ENCODE measurements at regions of chr4 and their contacts with region 1.

Region 1: DNA sequence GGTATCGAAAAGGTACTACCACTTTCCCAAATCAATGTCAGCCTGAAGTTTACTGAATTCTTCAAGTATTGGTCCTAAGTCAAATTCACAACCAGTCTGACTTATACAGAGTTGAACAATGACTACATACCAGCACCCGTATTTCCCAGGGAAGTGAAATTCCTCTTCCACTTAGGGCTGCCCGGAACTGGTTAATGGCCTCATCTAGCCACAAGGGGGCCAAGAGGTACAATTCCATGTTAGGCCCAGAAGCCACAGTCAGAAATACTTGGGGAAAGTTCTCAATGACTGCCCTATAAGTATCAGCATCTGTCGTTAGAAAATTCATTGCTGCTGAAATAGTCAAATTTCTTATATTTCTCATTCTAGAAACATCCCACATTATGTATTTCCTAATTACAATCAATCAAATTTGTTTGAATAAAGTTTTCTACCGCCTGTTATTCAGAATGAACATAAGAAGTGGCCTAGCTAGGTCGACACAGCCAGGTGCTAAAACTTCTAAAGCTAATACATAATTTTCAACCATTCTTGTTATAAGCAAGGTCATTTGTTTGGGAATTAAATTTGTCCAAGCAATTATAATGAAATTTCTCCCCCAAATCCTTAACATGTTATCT is 5.7 kb upstream of the PCDH7 start:
- ATAC-seq: peak in 2 of 8 experiments; percentile 1 to 12
- H3K4me3 ChIP-seq: no peak overlapping the region
- H3K27ac ChIP-seq: no peak overlapping the region
- H3K4me1 ChIP-seq: no peaks in the 10 kb centered on the region

Region 2: GRCh38 chr4:30461218-30461617 is 253.3 kb before region 1 on chr4:
- in situ Hi-C with region 1: no loop called
- ATAC-seq: no peak
- H3K4me3 ChIP-seq: no peak overlapping the region
- H3K27ac ChIP-seq: no peak overlapping the region
- H3K4me1 ChIP-seq: no peaks in the 10 kb centered on the region

Region 3: GRCh38 chr4:31328932-31329331 is 614.4 kb after region 1 on chr4:
- in situ Hi-C with region 1: loop called in 1 of 9 experiments (anchors 25 kb)
- ATAC-seq: peak in 3 of 8 experiments; percentile 85 to 91 (median 91)
- H3K4me3 ChIP-seq: no peak overlapping the region
- H3K27ac ChIP-seq: no peak overlapping the region
- H3K4me1 ChIP-seq: peaks cover 3 to 4% of the 10 kb centered on the region in 2 donors

Region 4: GRCh38 chr4:31692402-31692940 is 978.0 kb after region 1 on chr4:
- in situ Hi-C with region 1: loop called in 1 of 9 experiments (anchors 25 kb)
- ATAC-seq: peak in 2 of 8 experiments; percentile 39 to 48
- H3K4me3 ChIP-seq: no peak overlapping the region
- H3K27ac ChIP-seq: no peak overlapping the region
- H3K4me1 ChIP-seq: no peaks in the 10 kb centered on the region